AG04449 (cell line): ENCODE measurements at regions of chr6 and their contacts with region 1.

Region 1: DNA sequence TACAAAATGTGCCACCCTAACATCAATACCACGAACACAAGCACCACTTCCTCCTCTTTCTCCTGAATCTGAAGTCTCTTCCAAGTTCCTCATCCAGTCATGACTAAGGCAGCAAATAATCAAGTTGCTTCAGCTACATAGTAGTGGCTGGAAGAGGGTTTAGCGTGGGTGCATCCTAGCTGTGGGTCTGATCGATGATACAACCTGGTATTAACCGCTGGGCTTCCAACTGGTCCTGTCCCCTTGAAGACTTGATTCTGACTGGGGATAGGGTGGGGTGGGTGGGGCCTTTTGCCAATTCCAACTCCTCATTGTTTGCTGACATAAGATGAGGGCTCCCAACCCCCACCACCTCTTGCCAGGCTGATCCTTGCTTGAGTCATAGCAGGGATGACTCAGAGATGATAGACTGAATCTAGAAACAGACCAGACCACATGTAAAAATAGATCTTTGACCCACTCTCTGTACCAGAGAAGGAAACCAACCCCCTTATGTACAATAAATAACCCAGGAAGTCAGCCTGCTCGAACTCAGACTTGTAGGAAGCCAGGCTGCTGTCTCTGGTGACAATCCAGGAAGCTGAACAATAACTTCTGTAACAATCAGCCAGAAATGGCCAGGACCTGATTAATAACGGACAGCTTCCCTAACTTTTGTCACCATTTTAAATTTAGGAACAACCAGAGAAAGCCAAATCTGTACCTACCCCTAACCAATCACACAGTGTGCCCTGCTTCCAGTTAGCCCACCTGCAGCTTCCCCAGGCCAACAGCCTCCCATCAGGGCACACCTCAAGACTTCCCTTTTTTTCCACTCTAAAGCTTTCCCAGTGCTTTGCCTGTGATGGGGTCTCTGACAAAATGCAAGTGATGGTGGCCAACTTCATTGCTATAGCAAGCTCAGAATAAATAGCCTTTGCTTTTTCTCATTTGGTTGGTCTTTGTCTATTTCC is 68.9 kb upstream of the FAM184A start:
- DNase-seq: peak; percentile 82
- H3K4me3 ChIP-seq: no peak overlapping the region
- CTCF ChIP-seq: no peak

Region 2: DNA sequence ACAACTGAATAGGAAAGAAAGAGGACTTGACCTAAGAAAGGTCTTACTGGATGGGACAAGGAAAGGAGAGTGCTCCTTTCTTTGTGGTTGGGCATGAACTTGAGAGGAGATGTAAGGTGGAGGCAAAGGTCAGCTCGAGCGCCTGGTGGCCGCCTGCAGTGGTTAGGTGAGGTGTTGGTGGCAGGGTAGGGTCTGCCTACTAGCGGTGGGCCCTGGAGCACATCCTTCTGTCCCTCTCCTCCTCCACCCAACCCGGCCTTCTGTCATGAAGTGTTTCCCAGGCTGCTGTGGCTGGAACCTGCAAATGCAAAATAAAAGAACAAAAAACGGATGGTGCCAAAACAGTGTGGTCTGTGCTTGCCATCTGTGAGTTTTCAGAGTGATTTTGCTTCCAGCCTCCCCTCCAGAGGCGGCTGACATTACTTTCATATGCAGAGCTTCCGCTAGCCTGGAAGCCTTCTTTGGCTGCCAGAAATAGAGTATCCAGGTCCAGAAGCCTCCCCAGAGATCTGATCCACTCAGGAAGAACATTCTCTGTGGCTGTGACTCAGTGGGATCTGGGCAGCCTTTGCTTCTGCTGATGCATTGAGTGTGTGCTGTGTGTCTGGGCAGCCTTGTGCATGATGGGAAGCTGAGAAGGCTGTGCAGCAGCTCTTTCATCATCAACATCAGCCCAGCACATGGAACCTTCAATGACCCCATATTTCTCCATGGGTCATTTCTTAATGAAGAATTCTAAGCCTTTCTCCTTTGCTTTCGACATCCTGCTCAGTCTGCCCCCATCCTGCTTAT is 10.9 kb after region 1 on chr6:
- CTCF ChIA-PET with region 1: interaction called, 12 read pairs
- POLR2A ChIA-PET with region 1: no interaction called
- DNase-seq: no peak
- H3K4me3 ChIP-seq: no peak overlapping the region
- CTCF ChIP-seq: no peak

Region 3: DNA sequence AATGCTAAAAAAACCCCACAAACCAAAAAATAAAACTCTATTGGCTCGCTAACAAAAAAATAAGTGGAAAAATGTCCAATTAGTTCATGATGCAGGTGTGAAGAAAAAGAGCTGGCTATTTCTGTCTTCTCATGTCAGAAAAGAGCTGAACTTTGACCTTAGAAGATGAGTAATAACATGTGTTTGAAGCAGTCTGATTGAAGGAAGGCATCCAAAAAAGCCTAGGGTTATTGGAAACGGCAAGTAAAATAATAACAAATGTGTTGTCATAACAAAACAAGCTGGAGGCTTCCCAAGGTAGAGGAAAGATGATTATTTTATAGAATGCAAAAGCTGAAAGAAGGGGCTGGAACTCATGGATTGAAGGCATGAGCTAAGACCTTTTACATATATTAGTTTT is 25.4 kb after region 1 on chr6:
- CTCF ChIA-PET with region 1: no interaction called
- POLR2A ChIA-PET with region 1: no interaction called
- DNase-seq: no peak
- H3K4me3 ChIP-seq: no peak overlapping the region
- CTCF ChIP-seq: no peak

Region 4: DNA sequence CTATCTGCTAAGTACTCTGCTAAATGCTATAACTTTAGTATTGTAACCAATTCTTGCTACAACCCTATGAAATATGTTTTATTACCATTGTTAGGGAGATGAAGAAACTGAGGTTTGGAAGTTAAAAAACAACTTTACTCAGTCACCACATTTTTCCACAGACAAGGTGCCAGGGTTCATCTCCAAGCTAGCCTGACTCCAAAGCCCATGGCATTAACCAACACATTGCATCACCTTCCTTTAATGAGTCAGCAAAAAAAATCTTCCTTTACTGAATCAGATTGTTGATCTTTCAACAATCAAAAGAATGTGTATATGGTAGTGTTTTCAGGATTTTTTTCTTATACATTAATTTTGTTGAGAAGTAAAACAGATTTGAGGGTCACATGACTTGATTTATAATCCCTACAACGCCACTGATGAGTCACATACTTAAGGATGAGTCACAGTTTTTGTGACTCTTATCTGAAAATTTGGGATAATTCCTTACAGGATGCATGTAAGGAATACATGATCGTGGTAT is 160.7 kb after region 1 on chr6:
- CTCF ChIA-PET with region 1: no interaction called
- POLR2A ChIA-PET with region 1: no interaction called
- DNase-seq: no peak
- H3K4me3 ChIP-seq: no peak overlapping the region
- CTCF ChIP-seq: no peak

Region 5: DNA sequence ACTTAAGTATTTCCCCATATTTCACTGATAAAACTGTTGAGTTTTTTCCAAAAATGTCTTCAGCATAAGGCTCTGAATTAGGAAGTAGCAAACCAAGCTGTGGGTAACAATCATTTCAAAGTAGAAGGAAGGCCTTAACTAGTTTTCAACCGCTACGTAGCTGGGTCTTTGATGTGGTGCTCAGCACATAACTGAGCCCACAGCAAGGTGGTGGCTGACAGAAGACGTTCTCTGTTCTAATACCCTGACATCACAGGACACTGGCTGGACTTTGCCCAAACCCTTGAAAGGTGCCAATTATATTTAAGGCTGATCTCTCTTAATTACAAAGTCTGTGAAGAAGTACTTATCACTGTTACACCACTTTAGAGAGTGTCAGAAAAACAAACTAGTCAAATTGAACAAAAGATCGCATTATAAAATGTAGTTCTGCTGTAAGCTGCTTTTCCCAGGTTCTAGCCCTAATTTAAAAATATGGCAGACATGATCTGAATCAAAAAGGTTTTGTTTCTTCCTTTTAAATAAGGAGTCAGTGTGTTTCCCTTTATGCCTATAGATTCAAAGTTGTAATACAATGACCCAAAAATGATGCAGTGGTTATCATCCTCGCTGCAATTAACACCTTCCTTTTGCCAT is 175.5 kb after region 1 on chr6:
- CTCF ChIA-PET with region 1: interaction called, 11 read pairs
- POLR2A ChIA-PET with region 1: no interaction called
- DNase-seq: no peak
- H3K4me3 ChIP-seq: no peak overlapping the region
- CTCF ChIP-seq: no peak

Region 6: GRCh38 chr6:119349323-119350042 is 202.1 kb after region 1 on chr6 and contains the start of gene MAN1A1:
- CTCF ChIA-PET with region 1: interaction called, 40 read pairs
- POLR2A ChIA-PET with region 1: interaction called, 5 read pairs
- DNase-seq: no peak
- H3K4me3 ChIP-seq: peak within 1 kb of the TSS; percentile 81
- CTCF ChIP-seq: no peak